Activated CD4-positive, alpha-beta T cell treated with anti-CD3 and anti-CD28 coated beads, Interleukin-2, amount 10 ng/mL, durations not matched to agents 7 days and 5 days (primary cell): ENCODE measurements at regions of chr9 and their contacts with region 1.

Region 1: GRCh38 chr9:19587678-19588077 is 178.9 kb downstream of the ACER2 start:
- DNase-seq: no peak
- H3K4me3 Mint-ChIP-seq: no peak overlapping the region
- H3K27ac Mint-ChIP-seq: no peak overlapping the region
- H3K4me1 Mint-ChIP-seq: no peaks in the 10 kb centered on the region
- H3K27me3 Mint-ChIP-seq: peaks cover 8% of the 10 kb centered on the region

Region 2: DNA sequence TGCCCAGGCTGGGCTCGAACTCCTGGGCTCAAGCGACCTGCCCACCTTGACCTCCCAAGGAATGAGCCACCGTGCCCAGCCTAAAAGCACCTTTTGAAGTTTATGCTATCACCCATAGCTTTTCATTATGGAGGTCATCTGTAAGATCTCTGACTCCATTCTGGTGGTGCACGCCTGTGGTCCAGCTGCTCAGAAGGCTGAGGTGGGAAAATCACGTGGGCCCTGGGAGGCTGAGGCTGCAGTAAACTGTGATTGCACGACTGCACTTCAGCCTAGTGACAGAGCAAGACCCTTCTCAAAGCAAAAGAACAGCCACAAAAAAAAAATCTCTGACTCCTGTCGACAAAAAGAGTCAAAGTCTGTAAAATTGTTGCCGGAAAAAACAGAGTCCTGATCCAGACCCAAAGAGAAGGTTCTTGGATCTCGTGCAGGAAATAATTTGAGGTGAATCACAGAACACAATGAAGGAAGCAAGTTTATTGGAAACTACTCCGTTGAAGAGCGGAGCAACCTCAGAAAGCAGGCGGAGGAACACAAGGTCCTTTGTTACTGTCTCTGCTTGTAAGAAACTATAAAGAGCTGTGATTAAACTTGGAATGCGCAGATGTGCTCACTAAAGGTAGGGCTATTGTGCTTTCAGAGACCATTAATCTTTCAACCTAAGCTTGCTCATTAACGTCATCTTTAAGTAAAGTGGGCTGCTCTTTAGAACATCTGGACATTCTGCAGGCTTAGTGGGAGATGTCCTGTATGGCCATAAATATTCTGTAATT is 483.0 kb before region 1 on chr9:
- CTCF ChIA-PET with region 1: no interaction called
- POLR2A ChIA-PET with region 1: interaction called, 14 read pairs
- DNase-seq: no peak
- H3K4me3 Mint-ChIP-seq: no peak overlapping the region
- H3K27ac Mint-ChIP-seq: peak overlapping the region; percentile 62
- H3K4me1 Mint-ChIP-seq: peaks cover 20% of the 10 kb centered on the region
- H3K27me3 Mint-ChIP-seq: no peaks in the 10 kb centered on the region